Posterior cingulate gyrus (tissue), 11 donors: ENCODE measurements at regions of chr2 and their contacts with region 1.

Region 1: DNA sequence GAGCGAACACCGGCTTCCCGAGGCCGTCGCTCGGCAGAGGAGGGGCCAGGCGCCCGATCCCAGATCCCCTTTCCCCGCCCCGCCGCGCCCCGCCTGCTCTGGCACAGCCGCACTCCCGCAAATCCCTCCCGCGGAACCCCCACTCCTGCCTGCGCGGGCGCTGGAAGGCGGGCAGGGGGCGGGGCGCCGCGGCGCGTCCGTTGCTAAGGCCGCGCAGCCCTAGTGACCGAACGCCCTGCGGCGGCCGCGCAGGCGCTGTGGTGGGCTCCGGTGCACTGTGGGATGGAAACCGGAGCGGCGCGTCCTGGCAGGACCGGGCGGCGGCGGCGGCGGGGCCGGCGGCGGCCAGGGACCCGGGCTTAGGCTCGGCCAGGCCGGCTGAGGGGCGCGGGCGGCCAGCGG is at the start of gene TRAF3IP1:
- DNase-seq: peak; percentile 86 to 99 (median 94)

Region 2: GRCh38 chr2:238288650-238289573 is 31.3 kb before region 1 on chr2:
- intact Hi-C with region 1: loop called (anchors 2 kb)
- DNase-seq: peak; percentile 95 to 100 (median 97)

Region 3: DNA sequence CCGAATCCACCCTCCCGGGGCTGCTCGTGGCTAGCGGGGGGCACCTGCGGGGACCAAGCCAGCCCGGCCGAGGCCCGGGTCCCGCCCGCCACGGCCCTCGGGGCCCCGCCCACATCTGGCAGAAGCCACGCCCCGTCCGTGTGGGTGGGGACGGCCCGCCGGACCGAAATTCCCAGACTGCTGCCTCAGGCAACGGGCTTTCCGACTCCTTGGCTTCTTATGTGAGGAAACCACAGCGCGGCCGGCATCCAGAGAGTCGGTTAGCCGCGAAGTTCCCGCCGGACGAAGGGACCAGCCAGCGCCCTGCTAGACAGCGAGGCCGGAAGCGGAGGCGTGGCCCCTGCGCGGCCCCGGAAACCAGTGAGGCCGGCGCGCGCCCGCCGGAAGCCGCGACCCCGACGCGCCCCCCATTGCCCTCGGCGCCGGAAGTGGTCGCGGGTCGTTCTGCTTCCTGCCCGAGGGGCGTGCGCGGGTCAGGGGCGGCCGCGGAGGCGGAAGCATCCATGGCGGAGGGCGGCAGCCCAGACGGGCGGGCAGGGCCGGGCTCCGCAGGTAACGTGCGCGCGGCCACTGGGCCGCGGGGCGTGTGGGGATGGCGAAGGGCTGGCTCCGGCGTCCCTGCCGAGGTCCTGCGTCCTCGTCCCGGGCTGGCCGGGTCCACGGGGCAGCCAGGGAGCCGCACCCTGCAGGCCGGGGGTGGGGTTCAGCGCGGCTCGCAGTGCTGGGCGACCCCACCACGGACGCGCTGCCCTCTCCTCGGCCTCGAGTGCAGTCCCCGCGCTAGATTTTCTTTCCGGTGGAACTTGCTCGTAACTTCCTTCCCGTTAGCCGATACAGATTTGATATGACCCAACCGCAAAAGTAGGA is 106.6 kb after region 1 on chr2 and contains the start of gene ASB1:
- intact Hi-C with region 1: no loop called
- DNase-seq: peak; percentile 52 to 96 (median 70)